GM12878 (cell line): ENCODE measurements at regions of chr1 and their contacts with region 1.

Region 1: DNA sequence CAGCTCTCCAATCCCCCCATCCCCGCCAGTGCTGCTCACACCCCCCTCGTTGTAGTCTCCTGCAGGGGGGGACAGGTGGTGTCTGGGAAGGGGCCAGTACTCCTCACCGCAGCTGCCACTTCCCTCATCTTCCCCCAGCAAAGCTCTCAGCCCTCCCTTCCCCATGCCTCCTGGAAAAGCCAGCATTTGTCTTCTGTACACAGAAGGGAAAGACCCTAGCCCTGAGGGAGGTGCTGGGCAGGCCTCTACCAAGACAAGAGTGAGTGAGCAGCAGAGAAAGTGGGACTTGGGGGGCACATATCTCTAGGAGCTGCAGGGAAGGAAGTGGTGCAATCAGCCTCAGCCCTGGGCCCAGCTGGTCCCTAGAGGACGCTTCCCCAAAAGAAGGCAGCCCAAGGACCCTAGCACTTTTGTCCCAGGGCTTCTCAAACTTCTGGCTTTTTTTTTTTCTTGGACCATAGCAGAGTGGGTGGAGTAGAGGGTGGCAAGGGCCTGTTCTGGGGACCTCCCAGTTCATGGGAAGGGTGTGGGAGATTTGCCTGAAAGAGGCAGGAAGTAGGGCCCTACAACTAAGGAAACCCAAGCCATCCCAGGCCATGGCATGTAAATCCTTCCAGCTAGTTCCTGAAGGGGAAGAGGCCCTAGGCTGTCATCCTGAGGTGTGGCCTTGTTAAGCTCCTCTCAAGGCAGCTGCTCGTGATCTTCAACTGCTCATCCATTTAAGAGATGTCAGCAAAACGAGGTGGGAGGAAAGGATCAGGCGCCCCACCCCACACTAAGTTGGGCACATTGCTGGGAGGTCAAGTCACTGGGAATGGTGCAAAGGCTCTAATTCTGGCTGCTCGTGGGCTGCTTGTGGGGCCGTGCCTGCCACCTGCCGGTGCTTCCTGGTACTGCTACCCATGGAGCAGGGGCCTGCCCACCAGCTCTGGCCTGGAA is 12.6 kb downstream of the ZC3H12A start:
- DNase-seq: no peak
- ATAC-seq: peak; percentile 88
- H3K4me3 ChIP-seq: no peak overlapping the region
- H3K27ac ChIP-seq: 0 out of 2 replicates have a peak overlapping the region, but pooled peaks have one; percentile 15
- H3K4me1 ChIP-seq: peaks cover 9% of the 10 kb centered on the region
- H3K27me3 ChIP-seq: no peaks in the 10 kb centered on the region
- CTCF ChIP-seq: peak; percentile 94 to 99 (median 99)
- EP300 ChIP-seq: no peak
- POLR2A ChIP-seq: peak; percentile 21
- RAD21 ChIP-seq: peak; percentile 77

Region 2: GRCh38 chr1:37267111-37267813 is 219.7 kb before region 1 on chr1:
- CTCF ChIA-PET with region 1: no interaction called
- POLR2A ChIA-PET with region 1: no interaction called
- RAD21 ChIA-PET with region 1: no interaction called
- SMC1A ChIA-PET with region 1: no interaction called
- in situ Hi-C with region 1: no loop called
- intact Hi-C with region 1: no loop called
- DNase-seq: no peak
- ATAC-seq: no peak
- H3K4me3 ChIP-seq: no peak overlapping the region
- H3K27ac ChIP-seq: no peak overlapping the region
- H3K4me1 ChIP-seq: no peaks in the 10 kb centered on the region
- H3K27me3 ChIP-seq: no peaks in the 10 kb centered on the region
- CTCF ChIP-seq: no peak
- EP300 ChIP-seq: no peak
- POLR2A ChIP-seq: no peak
- RAD21 ChIP-seq: no peak

Region 3: GRCh38 chr1:37449936-37450335 is 37.0 kb before region 1 on chr1:
- CTCF ChIA-PET with region 1: interaction called, 289 read pairs
- POLR2A ChIA-PET with region 1: interaction called, 8 read pairs
- RAD21 ChIA-PET with region 1: interaction called, 166 read pairs
- SMC1A ChIA-PET with region 1: interaction called, 128 read pairs
- in situ Hi-C with region 1: loop called (anchors 5 kb)
- intact Hi-C with region 1: loop called (anchors 1 kb)
- DNase-seq: no peak
- ATAC-seq: peak; percentile 51
- H3K4me3 ChIP-seq: no peak overlapping the region
- H3K27ac ChIP-seq: no peak overlapping the region
- H3K4me1 ChIP-seq: no peaks in the 10 kb centered on the region
- H3K27me3 ChIP-seq: no peaks in the 10 kb centered on the region
- CTCF ChIP-seq: no peak
- EP300 ChIP-seq: no peak
- POLR2A ChIP-seq: no peak
- RAD21 ChIP-seq: no peak

Region 4: DNA sequence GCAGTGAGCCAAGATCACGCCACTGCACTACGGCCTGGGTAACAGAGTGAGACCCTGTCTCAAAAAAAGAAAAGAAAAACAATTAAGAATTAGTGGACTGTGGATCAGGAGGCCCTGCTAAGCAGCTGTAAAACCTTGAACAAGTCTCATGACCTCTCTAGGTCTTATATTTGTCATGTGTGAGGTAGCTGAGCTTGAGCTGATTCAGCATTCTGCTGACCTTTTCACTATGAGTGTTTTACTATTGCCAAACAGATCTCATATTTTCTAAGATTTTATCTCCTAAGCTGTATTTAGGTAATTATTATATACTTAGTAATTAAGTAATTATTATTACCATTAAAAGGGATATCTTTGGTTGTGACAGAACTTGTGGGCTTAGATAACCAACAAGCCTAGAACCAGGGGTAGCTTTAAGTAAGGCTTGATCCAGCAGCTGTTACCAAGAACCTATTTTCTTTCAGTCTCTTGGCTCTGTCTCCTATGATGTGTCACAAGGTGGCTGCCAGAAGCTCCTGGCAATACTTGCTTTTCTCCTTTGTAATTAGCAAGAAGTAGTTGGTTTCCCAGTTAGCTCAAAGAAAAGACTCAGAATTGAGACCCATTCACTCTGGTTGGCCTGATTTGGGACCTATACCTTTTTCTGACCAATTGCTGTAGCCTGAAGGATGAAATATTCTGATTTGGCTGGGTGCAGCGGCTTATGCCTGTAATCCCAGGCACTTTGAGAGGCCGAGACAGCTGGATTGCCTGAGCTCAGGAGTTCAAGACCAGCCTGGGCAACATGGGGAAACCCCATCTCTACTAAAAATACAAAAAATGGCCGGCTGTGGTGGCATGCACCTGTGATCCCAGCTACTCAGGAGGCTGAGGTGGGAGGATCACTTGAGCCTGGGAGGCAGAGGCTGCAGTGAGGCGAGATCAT is 21.1 kb before region 1 on chr1:
- CTCF ChIA-PET with region 1: interaction called, 289 read pairs
- POLR2A ChIA-PET with region 1: interaction called, 4 read pairs
- RAD21 ChIA-PET with region 1: interaction called, 166 read pairs
- SMC1A ChIA-PET with region 1: interaction called, 128 read pairs
- in situ Hi-C with region 1: no loop called
- intact Hi-C with region 1: no loop called
- DNase-seq: no peak
- ATAC-seq: no peak
- H3K4me3 ChIP-seq: no peak overlapping the region
- H3K27ac ChIP-seq: no peak overlapping the region
- H3K4me1 ChIP-seq: peaks cover 6% of the 10 kb centered on the region
- H3K27me3 ChIP-seq: no peaks in the 10 kb centered on the region
- CTCF ChIP-seq: no peak
- EP300 ChIP-seq: no peak
- POLR2A ChIP-seq: no peak
- RAD21 ChIP-seq: no peak

Region 5: GRCh38 chr1:37498872-37499617 is 12.1 kb after region 1 on chr1:
- CTCF ChIA-PET with region 1: interaction called, 73 read pairs
- POLR2A ChIA-PET with region 1: no interaction called
- RAD21 ChIA-PET with region 1: interaction called, 7 read pairs
- SMC1A ChIA-PET with region 1: interaction called, 23 read pairs
- in situ Hi-C with region 1: no loop called
- intact Hi-C with region 1: no loop called
- DNase-seq: no peak
- ATAC-seq: no peak
- H3K4me3 ChIP-seq: no peak overlapping the region
- H3K27ac ChIP-seq: no peak overlapping the region
- H3K4me1 ChIP-seq: no peaks in the 10 kb centered on the region
- H3K27me3 ChIP-seq: no peaks in the 10 kb centered on the region
- CTCF ChIP-seq: no peak
- EP300 ChIP-seq: no peak
- POLR2A ChIP-seq: no peak
- RAD21 ChIP-seq: no peak

Region 6: GRCh38 chr1:37514350-37515184 is 27.6 kb after region 1 on chr1 and contains the start of gene MEAF6:
- CTCF ChIA-PET with region 1: interaction called, 26 read pairs
- POLR2A ChIA-PET with region 1: no interaction called
- RAD21 ChIA-PET with region 1: interaction called, 8 read pairs
- SMC1A ChIA-PET with region 1: interaction called, 6 read pairs
- in situ Hi-C with region 1: no loop called
- intact Hi-C with region 1: no loop called
- DNase-seq: no peak
- ATAC-seq: peak; percentile 98
- H3K4me3 ChIP-seq: peak within 1 kb of the TSS; percentile 82
- H3K27ac ChIP-seq: peak within 1 kb of the TSS; percentile 39
- H3K4me1 ChIP-seq: peaks cover 6% of the 10 kb centered on the region
- H3K27me3 ChIP-seq: no peaks in the 10 kb centered on the region
- CTCF ChIP-seq: peak; percentile 36 to 74 (median 55); a peak in 5 of 6 replicates
- EP300 ChIP-seq: no peak
- POLR2A ChIP-seq: peak; percentile 84
- RAD21 ChIP-seq: no peak
- polyA plus RNA-seq, gene MEAF6: 30.8 to 33.3 TPM